ENCODE measurements at regions of chr6 and their contacts with region 1.

Region 1: GRCh38 chr6:125153391-125154117 is at the start of gene TPD52L1:
- DNase-seq: peak; percentile 75
- H3K4me3 ChIP-seq: peak within 1 kb of the TSS; percentile 38 to 56
- H3K27ac ChIP-seq: no peak within 1 kb of the TSS
- H3K4me1 ChIP-seq: peaks cover 0 to 5% of the 10 kb centered on the region in 2 experiments; a peak in 1 of 4 replicates
- H3K27me3 ChIP-seq: peaks cover 41% of the 10 kb centered on the region
- CTCF ChIP-seq: peak; percentile 77
- EP300 ChIP-seq: no peak
- RAD21 ChIP-seq: peak; percentile 53
- polyA plus RNA-seq, gene TPD52L1: 0.13 and 0.19 TPM in 2 replicates

Region 2: DNA sequence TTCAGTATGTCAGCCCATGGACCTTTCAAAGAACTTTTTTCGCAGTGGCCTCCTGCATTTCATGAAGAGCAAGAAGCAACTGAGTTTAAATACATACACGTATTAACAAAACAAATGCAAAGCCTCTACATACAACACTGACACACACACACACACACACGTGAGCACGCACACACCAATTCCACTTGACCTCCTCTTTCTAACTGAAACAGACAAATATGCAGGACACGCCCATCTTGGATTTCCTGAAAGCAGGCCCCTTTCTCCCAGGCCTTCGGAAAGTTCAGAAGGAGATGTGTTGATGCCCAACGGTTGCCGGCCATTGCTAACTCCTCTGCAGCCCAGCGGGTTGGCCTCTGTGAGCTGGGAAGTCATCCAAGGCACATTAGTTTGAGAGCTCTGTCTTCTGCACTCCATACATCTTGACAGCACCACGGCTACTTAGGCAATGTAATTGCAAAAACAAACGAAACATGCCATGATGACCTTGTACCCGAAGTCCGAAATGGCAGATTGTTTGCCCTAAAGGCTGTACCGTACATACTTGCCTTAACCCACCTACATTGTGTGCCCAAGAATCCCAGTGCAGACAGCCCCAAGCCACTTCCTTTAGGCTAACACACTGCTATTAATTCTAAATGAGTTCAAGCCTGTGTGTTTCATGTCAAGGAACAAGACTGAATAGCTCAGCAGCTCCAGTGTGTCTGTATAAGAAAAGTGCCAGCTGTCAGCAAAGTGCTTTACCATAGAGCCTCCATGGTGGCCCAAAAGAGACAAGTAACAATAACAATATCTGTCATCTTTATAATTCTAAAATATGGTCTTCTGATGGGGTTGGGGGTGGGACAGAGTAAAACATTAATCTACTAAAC is 330.1 kb before region 1 on chr6:
- CTCF ChIA-PET with region 1: no interaction called
- POLR2A ChIA-PET with region 1: no interaction called
- DNase-seq: no peak
- H3K4me3 ChIP-seq: no peak overlapping the region
- H3K27ac ChIP-seq: no peak overlapping the region
- H3K4me1 ChIP-seq: no peaks in the 10 kb centered on the region
- H3K27me3 ChIP-seq: no peaks in the 10 kb centered on the region; the same call in 1 of the 2 replicates
- CTCF ChIP-seq: no peak
- EP300 ChIP-seq: no peak
- RAD21 ChIP-seq: no peak

Region 3: DNA sequence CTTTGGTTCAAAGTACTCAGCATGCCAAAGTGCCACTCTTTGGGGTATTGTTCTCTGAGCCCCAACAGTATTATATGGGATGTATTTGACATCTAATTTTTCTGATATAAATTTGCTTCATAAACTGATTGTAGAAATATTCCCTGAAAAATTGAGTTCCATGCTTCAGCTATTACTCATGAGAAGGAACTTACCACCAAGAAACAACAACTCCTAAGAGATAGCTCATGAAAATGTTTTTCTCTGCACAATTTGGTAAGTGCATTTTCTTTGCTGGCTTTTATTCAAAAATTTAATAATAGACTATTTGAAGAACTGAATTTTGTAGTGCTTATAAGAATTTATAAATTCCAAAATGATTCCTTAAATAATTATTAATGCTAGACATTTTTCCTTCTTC is 12.7 kb before region 1 on chr6:
- CTCF ChIA-PET with region 1: interaction called, 10 read pairs
- POLR2A ChIA-PET with region 1: no interaction called
- DNase-seq: no peak
- H3K4me3 ChIP-seq: no peak overlapping the region
- H3K27ac ChIP-seq: no peak overlapping the region
- H3K4me1 ChIP-seq: no peaks in the 10 kb centered on the region
- H3K27me3 ChIP-seq: peaks cover 19% of the 10 kb centered on the region; the same call in 1 of the 2 replicates
- CTCF ChIP-seq: no peak
- EP300 ChIP-seq: no peak
- RAD21 ChIP-seq: no peak

Region 4: DNA sequence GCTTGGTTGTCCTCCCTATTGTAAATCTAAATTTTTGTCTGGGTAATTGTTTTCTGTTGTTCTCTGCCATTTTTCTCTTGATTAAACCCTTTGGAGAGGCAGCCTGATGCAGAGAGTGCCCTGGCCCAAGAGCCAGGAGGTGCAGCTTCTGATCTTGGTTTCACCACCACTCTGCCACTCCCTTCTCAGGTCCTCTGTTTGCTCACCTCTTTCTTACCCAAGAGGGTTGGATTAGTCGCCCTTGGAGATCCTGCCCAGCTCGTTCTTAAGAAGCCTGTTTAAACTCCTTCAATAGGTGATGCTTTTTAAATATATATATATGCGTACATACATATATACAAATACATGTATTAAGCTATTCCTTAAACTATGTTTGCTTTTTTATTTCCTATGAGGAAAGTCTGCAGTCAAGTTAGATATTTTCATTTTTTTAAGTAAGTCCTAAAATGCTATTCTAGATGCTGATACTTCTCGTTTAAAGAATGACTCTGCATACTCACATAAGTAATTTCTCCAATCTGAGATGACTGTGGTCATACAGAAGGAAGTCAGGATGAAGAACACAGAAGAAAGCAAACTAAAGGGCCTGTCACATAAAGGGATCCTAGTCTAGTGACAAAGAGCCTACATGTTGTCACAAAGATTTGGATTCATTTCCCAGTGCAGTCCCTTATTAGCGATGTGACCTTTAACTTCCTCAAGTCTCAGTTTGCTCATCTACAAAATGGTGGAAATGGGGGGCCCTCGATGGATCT is 20.0 kb after region 1 on chr6:
- CTCF ChIA-PET with region 1: interaction called, 14 read pairs
- POLR2A ChIA-PET with region 1: no interaction called
- DNase-seq: no peak
- H3K4me3 ChIP-seq: no peak overlapping the region
- H3K27ac ChIP-seq: no peak overlapping the region
- H3K4me1 ChIP-seq: no peaks in the 10 kb centered on the region
- H3K27me3 ChIP-seq: peaks cover 6% of the 10 kb centered on the region; the same call in 1 of the 2 replicates
- CTCF ChIP-seq: no peak
- EP300 ChIP-seq: no peak
- RAD21 ChIP-seq: no peak

Measured in SK-N-SH (cell line).